ENCODE measurements at regions of chr11 and their contacts with region 1.

Region 1: DNA sequence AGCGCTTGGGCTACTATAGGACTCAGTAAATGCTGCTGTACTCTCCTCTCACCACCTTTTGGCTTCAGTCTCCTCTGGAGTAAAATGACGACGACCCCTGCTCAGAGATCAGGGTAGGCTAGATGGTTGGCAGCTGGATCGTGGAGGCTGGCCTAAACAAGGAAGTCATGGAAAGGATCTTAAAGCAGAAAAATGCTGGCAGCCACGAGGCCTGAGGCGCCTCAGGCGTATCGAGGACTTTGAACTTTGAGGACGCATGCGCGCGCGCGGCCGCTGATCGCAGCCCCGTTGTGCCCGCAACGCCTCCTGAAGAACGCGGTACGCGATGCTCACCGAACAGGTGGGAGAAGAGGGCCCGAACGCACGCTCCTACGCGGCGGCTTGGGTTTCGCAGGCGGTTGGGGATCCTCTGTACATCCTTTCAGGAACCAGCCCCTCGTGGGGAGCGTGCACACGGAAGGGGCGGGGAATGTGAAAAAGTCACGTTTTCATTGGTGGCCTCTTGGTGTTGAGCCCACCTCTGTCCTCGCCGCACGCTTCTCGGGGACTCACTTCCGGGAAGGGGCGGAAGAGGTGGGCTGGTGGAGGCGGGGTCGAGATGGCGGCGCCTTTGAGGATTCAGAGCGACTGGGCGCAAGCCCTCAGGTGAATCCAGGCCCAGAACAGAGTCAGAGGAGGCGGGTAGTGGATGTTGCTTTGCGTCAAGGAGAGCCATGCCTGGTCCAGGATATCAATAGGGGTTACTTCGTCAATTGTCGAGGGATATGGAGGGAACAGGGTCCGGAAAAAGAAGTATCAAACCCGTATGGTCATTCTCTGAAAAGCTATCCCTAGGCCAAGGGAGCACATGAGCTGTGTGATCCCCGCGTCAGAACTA is at the starts of genes COA4 and PAAF1:
- DNase-seq: peak; percentile 86 to 98
- ATAC-seq: peak; percentile 98 to 100 (median 99)
- H3K4me3 ChIP-seq: peak within 1 kb of the TSS; percentile 83
- H3K4me3 Mint-ChIP-seq: peak within 1 kb of the TSS; percentile 99
- H3K27ac ChIP-seq: peak within 1 kb of the TSS; percentile 64
- H3K27ac Mint-ChIP-seq: peak within 1 kb of the TSS; percentile 97 to 100
- H3K4me1 ChIP-seq: peaks cover 15% of the 10 kb centered on the region
- H3K4me1 Mint-ChIP-seq: peaks cover 40 to 42% of the 10 kb centered on the region in 2 donors
- H3K27me3 ChIP-seq: no peaks in the 10 kb centered on the region
- H3K27me3 Mint-ChIP-seq: no peaks in the 10 kb centered on the region
- CTCF ChIP-seq: no peak
- total RNA-seq, gene COA4: 23.0 to 32.9 (median 26.0) TPM
- total RNA-seq, gene PAAF1: 12.0 to 14.9 (median 13.7) TPM

Region 2: GRCh38 chr11:73760679-73761402 is 115.8 kb before region 1 on chr11 and contains the start of gene RAB6A:
- intact Hi-C with region 1: loop called (anchors 2 kb)
- DNase-seq: peak; percentile 96 to 100
- ATAC-seq: peak; percentile 89 to 95 (median 90)
- H3K4me3 ChIP-seq: peak within 1 kb of the TSS; percentile 99
- H3K4me3 Mint-ChIP-seq: peak within 1 kb of the TSS; percentile 84
- H3K27ac ChIP-seq: peak within 1 kb of the TSS; percentile 85
- H3K27ac Mint-ChIP-seq: peak within 1 kb of the TSS; percentile 82 to 95
- H3K4me1 ChIP-seq: peaks cover 11% of the 10 kb centered on the region
- H3K4me1 Mint-ChIP-seq: peaks cover 19 to 30% of the 10 kb centered on the region in 2 donors
- H3K27me3 ChIP-seq: no peaks in the 10 kb centered on the region
- H3K27me3 Mint-ChIP-seq: no peaks in the 10 kb centered on the region
- CTCF ChIP-seq: peak; percentile 16
- total RNA-seq, gene RAB6A: 72.2 to 107 (median 97.7) TPM

Region 3: GRCh38 chr11:73787643-73788537 is 88.8 kb before region 1 on chr11 and contains the start of gene MRPL48:
- intact Hi-C with region 1: loop called (anchors 10 kb)
- DNase-seq: peak; percentile 80 to 92
- ATAC-seq: peak; percentile 98 to 100 (median 99)
- H3K4me3 ChIP-seq: peak within 1 kb of the TSS; percentile 97
- H3K4me3 Mint-ChIP-seq: peak within 1 kb of the TSS; percentile 100
- H3K27ac ChIP-seq: peak within 1 kb of the TSS; percentile 74
- H3K27ac Mint-ChIP-seq: peak within 1 kb of the TSS; percentile 91 to 97
- H3K4me1 ChIP-seq: peaks cover 14% of the 10 kb centered on the region
- H3K4me1 Mint-ChIP-seq: peaks cover 11 to 15% of the 10 kb centered on the region in 2 donors
- H3K27me3 ChIP-seq: no peaks in the 10 kb centered on the region
- H3K27me3 Mint-ChIP-seq: no peaks in the 10 kb centered on the region
- CTCF ChIP-seq: no peak
- total RNA-seq, gene MRPL48: 19.5 to 24.9 (median 21.2) TPM

Region 4: GRCh38 chr11:73916435-73916834 is 39.8 kb after region 1 on chr11:
- intact Hi-C with region 1: no loop called
- DNase-seq: no peak
- ATAC-seq: no peak
- H3K4me3 ChIP-seq: no peak overlapping the region
- H3K4me3 Mint-ChIP-seq: no peak overlapping the region
- H3K27ac ChIP-seq: no peak overlapping the region
- H3K27ac Mint-ChIP-seq: no peak overlapping the region
- H3K4me1 ChIP-seq: no peaks in the 10 kb centered on the region
- H3K4me1 Mint-ChIP-seq: no peaks in the 10 kb centered on the region
- H3K27me3 ChIP-seq: no peaks in the 10 kb centered on the region
- H3K27me3 Mint-ChIP-seq: no peaks in the 10 kb centered on the region
- CTCF ChIP-seq: no peak

Region 5: GRCh38 chr11:74170694-74171629 is 294.3 kb after region 1 on chr11 and contains the starts of genes C2CD3 and PPME1:
- intact Hi-C with region 1: loop called (anchors 2 kb)
- DNase-seq: peak; percentile 93 to 99
- ATAC-seq: peak; percentile 91 to 96 (median 92)
- H3K4me3 ChIP-seq: peak within 1 kb of the TSS; percentile 80
- H3K4me3 Mint-ChIP-seq: no peak within 1 kb of the TSS
- H3K27ac ChIP-seq: peak within 1 kb of the TSS; percentile 77
- H3K27ac Mint-ChIP-seq: no peak within 1 kb of the TSS
- H3K4me1 ChIP-seq: peaks cover 20% of the 10 kb centered on the region
- H3K4me1 Mint-ChIP-seq: peaks cover 4 to 6% of the 10 kb centered on the region in 2 donors
- H3K27me3 ChIP-seq: no peaks in the 10 kb centered on the region
- H3K27me3 Mint-ChIP-seq: no peaks in the 10 kb centered on the region
- CTCF ChIP-seq: peak; percentile 14
- total RNA-seq, gene C2CD3: 55.0 to 67.6 (median 58.1) TPM
- total RNA-seq, gene PPME1: 15.6 to 18.5 (median 16.9) TPM

Region 6: DNA sequence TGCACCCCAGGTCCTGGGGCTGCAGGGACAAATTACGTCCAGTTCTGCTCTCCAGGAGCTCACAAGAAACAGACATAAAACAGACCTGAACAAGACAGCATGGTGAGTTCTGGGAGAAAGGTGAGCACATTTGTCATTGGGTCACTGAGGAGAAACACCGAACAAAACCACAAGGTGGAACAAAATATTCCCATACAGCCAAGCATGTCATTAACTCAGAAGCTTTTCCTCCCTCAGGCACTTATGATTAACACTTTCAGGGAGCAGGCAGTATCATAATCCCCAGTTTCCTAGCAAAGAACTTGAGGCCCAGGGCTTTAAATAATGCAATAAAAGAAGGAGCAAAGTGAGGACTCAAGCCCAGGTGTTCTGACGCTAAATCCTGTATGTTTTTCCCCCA is 391.8 kb after region 1 on chr11:
- intact Hi-C with region 1: no loop called
- DNase-seq: no peak
- ATAC-seq: no peak
- H3K4me3 ChIP-seq: no peak overlapping the region
- H3K4me3 Mint-ChIP-seq: no peak overlapping the region
- H3K27ac ChIP-seq: no peak overlapping the region
- H3K27ac Mint-ChIP-seq: no peak overlapping the region
- H3K4me1 ChIP-seq: no peaks in the 10 kb centered on the region
- H3K4me1 Mint-ChIP-seq: peaks cover 0 to 6% of the 10 kb centered on the region in 2 donors
- H3K27me3 ChIP-seq: no peaks in the 10 kb centered on the region
- H3K27me3 Mint-ChIP-seq: peaks cover 12 to 43% of the 10 kb centered on the region in 2 donors
- CTCF ChIP-seq: no peak

Measured in natural killer cell (primary cell).